Left ventricle myocardium inferior (tissue), 1 donor: ENCODE measurements at regions of chr4 and their contacts with region 1.

Region 1: DNA sequence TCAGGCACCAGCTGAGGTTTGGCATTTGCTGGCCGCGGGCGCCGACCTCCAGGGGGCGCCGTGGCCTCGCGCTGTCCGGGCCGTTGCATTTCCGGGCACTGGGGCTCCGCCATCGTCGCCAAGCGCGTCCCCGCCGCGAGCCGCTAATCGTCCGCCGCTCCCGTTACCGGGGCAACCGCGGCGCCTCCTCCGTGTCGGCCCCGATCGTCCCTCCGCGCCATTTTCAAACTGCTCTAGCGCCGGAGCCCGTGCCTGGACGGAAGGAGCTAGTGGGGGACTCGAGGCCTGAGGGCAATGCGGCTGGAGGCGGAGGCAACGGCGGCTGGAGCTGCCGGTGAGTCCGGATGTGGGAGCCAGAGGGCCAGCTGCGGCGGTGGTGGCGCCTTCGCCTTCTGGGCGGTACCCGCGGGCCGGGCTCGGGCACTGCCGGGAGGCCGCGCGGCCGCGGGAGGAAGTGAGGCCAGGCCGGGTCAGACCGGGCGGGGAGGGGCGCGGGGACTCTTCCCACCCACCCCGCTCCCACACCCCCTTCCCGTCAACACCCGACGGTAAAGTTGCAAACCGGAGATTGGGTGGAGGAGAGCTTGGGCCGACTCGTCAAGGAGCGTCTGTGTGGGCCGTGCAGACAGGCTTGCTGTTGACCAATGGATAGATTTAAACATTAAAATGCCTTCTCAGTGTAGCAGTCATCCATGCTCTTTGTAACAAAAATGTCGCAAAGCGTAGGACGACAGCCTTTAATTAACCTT is at the start of gene CEP135:
- DNase-seq: peak; percentile 95
- H3K4me3 ChIP-seq: peak within 1 kb of the TSS; percentile 87
- H3K27ac ChIP-seq: peak within 1 kb of the TSS; percentile 96
- H3K4me1 ChIP-seq: peaks cover 27% of the 10 kb centered on the region
- H3K27me3 ChIP-seq: no peaks in the 10 kb centered on the region
- CTCF ChIP-seq: peak; percentile 98
- total RNA-seq, gene CEP135: 2.5 TPM

Region 2: DNA sequence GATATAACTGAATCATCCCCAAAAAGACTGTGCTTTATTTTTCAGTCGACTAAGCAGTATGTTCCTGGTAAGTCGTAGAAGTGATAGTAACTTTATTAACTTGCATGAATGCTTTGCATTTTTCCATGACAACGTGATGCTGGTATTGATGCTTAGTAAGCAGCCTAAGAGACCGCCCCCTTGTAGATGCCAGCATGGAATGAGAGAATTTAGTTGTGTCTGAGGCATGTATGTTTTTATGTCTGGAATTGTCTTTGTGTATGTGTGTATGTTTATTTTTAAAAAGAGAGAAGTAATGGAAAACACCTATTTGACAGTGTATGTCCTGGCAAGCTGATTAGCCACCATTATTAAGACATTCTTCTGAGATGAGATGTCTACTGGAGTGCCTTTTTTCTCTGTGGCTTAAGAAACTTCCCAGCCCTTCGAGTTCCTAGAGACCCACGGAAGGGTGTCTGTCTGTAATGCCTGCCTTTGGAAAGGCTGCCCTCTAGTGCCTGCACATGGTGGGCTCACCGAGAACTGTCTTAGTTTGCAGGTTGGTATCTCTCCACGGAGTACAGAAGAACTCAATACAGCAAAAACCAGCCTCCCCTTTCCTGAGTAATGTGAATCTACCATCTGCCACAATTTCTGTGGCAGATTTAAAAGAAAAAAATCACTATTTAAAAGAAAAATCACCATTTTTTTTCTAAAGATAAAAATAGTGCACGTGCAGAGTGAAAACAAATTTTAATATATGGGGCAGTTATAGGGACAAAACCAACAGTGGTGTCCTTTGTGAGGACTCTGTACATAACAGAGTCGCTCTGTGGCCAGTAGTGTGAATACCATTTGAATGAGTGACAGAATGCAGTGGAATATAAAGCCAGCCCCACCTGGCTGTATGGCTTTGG is 352.5 kb after region 1 on chr4:
- intact Hi-C with region 1: loop called (anchors 10 kb)
- DNase-seq: peak; percentile 42
- H3K4me3 ChIP-seq: no peak overlapping the region
- H3K27ac ChIP-seq: no peak overlapping the region
- H3K4me1 ChIP-seq: no peaks in the 10 kb centered on the region
- H3K27me3 ChIP-seq: peaks cover 6% of the 10 kb centered on the region
- CTCF ChIP-seq: peak; percentile 84